Stomach (tissue), 19 donors: ENCODE measurements at regions of chr2 and their contacts with region 1.

Region 1: GRCh38 chr2:105576440-105577252 is 168.1 kb upstream of the NCK2 start:
- DNase-seq: peak in 1 of 2 donors; percentile 71
- H3K4me3 ChIP-seq: peak overlapping the region in 1 of 4 donors; percentile 11
- H3K27ac ChIP-seq: peak overlapping the region; percentile 7 to 77 (median 38)
- H3K4me1 ChIP-seq: peaks cover 16 to 40% (median 32%) of the 10 kb centered on the region in 4 donors
- H3K27me3 ChIP-seq: no peaks in the 10 kb centered on the region
- CTCF ChIP-seq: peak in 5 of 7 experiments; percentile 59 to 68 (median 60)
- EP300 ChIP-seq: no peak
- POLR2A ChIP-seq: no peak

Region 2: DNA sequence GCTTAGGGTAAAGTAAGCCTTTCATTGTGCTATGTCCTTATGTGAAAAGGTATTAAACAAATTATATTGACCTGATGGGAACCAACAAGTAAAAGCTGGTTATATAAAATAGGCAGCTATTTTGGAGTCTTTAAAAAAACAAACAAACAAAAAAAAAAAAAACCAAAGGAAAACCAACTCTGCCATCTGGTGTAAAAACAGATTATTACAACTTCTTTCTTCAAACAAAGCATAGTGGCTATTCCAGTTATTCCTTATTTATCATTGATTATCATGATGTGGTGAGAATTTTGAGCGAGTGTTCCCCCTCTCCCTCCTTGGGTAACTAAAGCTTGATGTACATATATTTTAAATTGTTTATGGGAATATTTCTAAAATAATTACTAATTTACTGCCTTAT is 55.4 kb before region 1 on chr2:
- intact Hi-C with region 1: no loop called
- DNase-seq: peak in 1 of 2 donors; percentile 41
- H3K4me3 ChIP-seq: no peak overlapping the region
- H3K27ac ChIP-seq: no peak overlapping the region
- H3K4me1 ChIP-seq: peaks cover 13 to 30% (median 25%) of the 10 kb centered on the region in 4 donors
- H3K27me3 ChIP-seq: no peaks in the 10 kb centered on the region
- CTCF ChIP-seq: peak in 5 of 7 experiments; percentile 24 to 74 (median 44)
- EP300 ChIP-seq: no peak
- POLR2A ChIP-seq: no peak

Region 3: DNA sequence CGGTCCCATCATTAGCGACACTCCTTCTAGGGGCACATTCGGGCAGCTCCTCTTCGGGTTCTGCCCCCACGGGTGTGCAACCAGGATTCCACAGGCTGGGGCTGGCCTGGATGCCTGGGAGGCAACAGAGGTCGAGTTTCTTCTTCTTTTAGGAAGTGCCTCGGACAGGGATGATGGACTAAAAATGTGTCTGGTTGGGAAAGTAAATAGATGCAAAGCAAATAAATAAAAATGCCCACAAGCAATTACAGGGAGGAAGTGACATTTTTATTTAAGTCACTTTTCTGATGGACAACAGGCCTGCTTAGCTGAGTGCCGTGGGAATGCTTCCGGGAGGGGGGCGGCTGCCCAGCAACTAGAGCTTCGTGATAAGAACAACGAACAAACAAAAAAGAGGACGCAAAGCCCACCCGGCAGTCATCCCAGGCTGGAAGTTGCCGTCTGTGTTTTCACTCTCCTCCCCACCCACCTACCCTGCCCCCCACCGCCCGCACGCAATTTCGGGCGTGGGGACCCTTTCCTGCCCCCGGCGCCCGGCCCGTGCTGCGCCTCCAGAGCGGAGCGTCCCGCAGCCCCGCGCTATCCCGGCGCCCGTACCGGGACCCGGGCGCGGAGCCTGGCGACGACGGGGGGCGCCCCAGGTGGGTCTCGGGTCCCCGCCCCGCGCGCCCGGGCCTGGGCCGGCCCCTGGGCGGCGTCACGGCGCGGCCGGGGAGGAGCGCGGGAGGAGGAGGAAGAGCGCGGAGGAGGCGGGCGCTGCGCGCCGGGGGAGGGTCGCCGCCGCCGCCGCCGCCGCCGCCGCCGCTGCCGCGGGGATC is 167.7 kb after region 1 on chr2:
- intact Hi-C with region 1: loop called (anchors 10 kb)
- DNase-seq: peak; percentile 68 to 92
- H3K4me3 ChIP-seq: peak overlapping the region; percentile 60 to 99 (median 70)
- H3K27ac ChIP-seq: peak overlapping the region; percentile 91 to 97 (median 94)
- H3K4me1 ChIP-seq: peaks cover 28 to 45% (median 36%) of the 10 kb centered on the region in 4 donors
- H3K27me3 ChIP-seq: no peaks in the 10 kb centered on the region
- CTCF ChIP-seq: no peak
- EP300 ChIP-seq: no peak
- POLR2A ChIP-seq: no peak

Region 4: GRCh38 chr2:106098081-106098480 is 521.4 kb after region 1 on chr2:
- intact Hi-C with region 1: loop called (anchors 10 kb)
- DNase-seq: no peak
- H3K4me3 ChIP-seq: no peak overlapping the region
- H3K27ac ChIP-seq: no peak overlapping the region
- H3K4me1 ChIP-seq: peaks cover 0 to 5% (median 0%) of the 10 kb centered on the region in 4 donors
- H3K27me3 ChIP-seq: no peaks in the 10 kb centered on the region
- CTCF ChIP-seq: peak in 1 of 7 experiments; percentile 8
- EP300 ChIP-seq: no peak
- POLR2A ChIP-seq: no peak